ENCODE measurements at regions of chr12 and their contacts with region 1.

Region 1: DNA sequence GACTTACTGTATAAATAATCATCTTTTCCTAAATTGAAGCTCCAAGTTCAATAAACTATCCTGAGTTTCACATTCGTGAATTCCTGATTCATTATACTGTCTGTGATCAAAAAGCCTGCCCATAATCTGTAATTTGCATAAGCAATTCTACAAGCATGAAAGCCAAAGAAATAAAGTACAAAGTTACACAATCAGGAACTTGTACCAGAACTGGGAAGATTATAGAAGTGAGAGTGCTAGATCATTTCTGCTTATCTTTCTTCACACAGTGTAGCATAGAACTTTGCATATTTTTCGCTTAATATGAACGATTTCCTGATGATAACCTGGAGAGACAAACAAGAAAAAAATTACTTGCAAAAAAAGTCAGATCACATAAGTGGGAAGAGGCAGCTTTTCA is 308.2 kb downstream of the C12orf50 start:
- DNase-seq: no peak
- ATAC-seq: no peak
- H3K4me3 ChIP-seq: no peak overlapping the region
- H3K27ac ChIP-seq: no peak overlapping the region
- H3K4me1 ChIP-seq: no peaks in the 10 kb centered on the region
- H3K27me3 ChIP-seq: no peaks in the 10 kb centered on the region
- CTCF ChIP-seq: no peak
- EP300 ChIP-seq: no peak
- POLR2A ChIP-seq: no peak
- RAD21 ChIP-seq: no peak

Region 2: DNA sequence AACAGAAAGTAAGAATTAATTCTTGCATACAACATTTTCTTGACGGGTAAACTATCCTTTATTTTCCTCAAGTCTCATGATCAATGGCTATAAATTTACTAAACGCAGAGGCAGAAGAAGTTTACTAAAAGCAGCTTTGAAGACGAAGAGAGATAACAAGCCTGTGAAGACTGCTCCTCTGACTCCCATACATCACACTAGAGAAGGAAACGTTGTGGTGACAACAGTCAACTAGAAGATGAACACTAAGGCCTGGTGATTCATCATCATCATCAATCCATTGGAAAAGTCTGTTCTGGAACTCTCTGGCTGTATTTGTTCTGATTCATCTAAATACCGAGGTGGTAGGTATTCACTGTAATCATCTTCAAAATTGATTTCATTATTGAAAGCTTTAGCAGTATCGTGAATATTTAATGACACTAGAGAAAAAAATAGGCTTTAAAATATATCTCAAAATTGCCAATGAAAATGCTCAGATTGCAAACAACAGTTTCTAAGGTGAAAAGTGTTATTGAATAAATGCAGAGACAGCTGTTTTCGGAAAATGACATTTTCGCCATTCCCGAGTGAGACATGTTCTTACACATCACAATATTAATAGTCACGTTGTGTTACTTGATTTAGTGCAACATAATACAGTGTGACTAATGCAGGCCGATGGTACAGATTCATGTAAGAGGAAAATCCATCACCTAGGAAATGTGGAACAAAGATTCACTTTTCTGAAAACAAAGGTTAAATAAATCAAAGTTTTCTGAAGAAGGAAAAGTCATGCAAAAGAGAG is 47.7 kb after region 1 on chr12:
- CTCF ChIA-PET with region 1: no interaction called
- POLR2A ChIA-PET with region 1: no interaction called
- RAD21 ChIA-PET with region 1: no interaction called
- SMC1A ChIA-PET with region 1: no interaction called
- in situ Hi-C with region 1: no loop called
- intact Hi-C with region 1: loop called (anchors 5 kb)
- DNase-seq: no peak
- ATAC-seq: no peak
- H3K4me3 ChIP-seq: no peak overlapping the region
- H3K27ac ChIP-seq: no peak overlapping the region
- H3K4me1 ChIP-seq: no peaks in the 10 kb centered on the region
- H3K27me3 ChIP-seq: no peaks in the 10 kb centered on the region
- CTCF ChIP-seq: no peak
- EP300 ChIP-seq: no peak
- POLR2A ChIP-seq: no peak
- RAD21 ChIP-seq: no peak

Measured in GM12878 (cell line).